PC-9 (cell line): ENCODE measurements at regions of chr16 and their contacts with region 1.

Region 1: DNA sequence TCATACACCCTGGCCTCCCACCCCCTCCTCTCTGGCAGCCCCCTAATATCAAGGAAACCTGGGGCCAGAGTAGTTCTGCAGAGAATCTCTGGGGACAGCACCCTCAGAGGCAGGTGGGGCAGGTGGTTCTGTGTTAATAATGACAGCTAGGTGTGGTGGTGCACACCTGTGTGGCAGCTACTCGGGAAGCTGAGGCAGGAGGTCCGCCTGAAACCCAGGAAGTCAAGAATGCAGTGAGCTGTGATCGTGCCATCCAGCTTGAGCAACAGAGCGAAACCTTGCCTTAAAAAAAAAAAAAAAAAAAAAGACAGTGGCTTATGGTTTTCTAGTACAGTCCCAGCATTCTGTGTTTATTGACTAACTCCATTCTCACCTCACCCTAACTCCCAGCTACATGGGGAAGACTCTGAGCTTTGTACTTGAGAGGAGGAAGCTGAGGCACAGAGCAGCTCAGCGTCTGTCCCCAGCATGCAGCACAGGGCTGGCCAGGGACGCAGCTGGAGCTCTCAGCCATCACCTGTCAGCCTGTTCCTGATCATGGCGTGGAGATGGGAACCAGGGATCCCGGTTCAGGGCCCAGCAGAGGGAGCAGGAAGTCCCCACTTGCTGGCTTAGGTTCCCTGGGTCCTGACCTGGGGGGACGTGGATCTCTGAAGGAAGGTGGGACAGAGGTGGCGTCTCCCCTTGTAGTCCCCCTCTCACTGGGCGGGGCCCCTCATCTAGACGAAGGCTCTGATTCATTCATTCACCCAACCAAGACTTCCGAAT is 6.1 kb downstream of the DBNDD1 start:
- DNase-seq: no peak
- H3K4me3 ChIP-seq: no peak overlapping the region
- H3K27ac ChIP-seq: no peak overlapping the region
- H3K4me1 ChIP-seq: no peaks in the 10 kb centered on the region
- H3K27me3 ChIP-seq: no peaks in the 10 kb centered on the region
- CTCF ChIP-seq: no peak

Region 2: GRCh38 chr16:90046971-90047713 is 34.0 kb after region 1 on chr16:
- CTCF ChIA-PET with region 1: interaction called, 10 read pairs
- POLR2A ChIA-PET with region 1: no interaction called
- intact Hi-C with region 1: no loop called
- DNase-seq: peak; percentile 58 to 80
- H3K4me3 ChIP-seq: peak overlapping the region; percentile 77
- H3K27ac ChIP-seq: no peak overlapping the region
- H3K4me1 ChIP-seq: peaks cover 34% of the 10 kb centered on the region
- H3K27me3 ChIP-seq: no peaks in the 10 kb centered on the region
- CTCF ChIP-seq: no peak